ENCODE measurements at regions of chr9 and their contacts with region 1.

Region 1: DNA sequence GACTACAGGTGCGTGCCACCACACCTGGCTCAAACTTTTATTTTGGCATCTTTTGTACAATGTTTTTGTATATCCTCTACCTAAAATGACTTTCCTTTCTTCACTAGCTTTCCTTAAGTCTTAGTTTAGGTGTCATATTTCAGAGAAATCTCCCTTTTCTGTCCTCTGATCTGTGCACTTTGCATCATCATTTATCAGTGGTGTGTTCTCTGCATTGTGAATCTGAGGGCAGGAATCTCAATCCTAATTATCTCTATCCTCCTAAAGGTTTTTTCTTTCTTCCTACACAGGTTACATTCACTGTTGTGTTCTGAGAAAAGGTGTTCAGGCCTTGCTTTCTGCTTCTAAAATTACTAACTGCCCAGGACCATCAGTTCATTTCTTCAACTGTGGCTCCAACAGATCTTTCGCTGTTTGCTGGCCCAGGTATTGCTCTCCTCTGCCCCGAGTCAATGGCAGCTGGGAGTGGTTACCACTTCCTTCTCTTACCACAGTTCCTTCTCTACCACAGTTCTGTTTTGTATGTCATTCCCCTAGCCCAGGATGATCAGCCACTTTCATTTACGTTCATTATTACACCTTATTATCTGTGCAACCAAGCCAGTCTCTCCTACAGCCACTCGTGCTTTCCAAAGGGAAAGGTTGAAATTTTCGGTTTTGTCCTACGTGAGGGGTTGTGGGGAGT is 14.0 kb downstream of the TGFBR1 start:
- DNase-seq: peak in 34 of 35 experiments; percentile 22 to 75 (median 52)
- ATAC-seq: peak; percentile 100
- H3K4me3 ChIP-seq: peak overlapping the region; percentile 13 to 33
- H3K4me3 Mint-ChIP-seq: peak overlapping the region; percentile 62 to 74 (median 72)
- H3K27ac ChIP-seq: peak overlapping the region; percentile 30
- H3K27ac Mint-ChIP-seq: peak overlapping the region; percentile 90 to 92
- H3K4me1 ChIP-seq: peaks cover 29 to 89% of the 10 kb centered on the region in 2 experiments
- H3K4me1 Mint-ChIP-seq: peaks cover 90 to 92% (median 91%) of the 10 kb centered on the region in 3 donors
- H3K27me3 ChIP-seq: no peaks in the 10 kb centered on the region
- H3K27me3 Mint-ChIP-seq: no peaks in the 10 kb centered on the region

Region 2: GRCh38 chr9:99104459-99105151 is 14.3 kb before region 1 on chr9 and contains the start of gene TGFBR1:
- CTCF ChIA-PET with region 1: interaction called, 3 to 6 read pairs
- POLR2A ChIA-PET with region 1: interaction called, 10 read pairs
- DNase-seq: peak; percentile 75 to 95 (median 87)
- ATAC-seq: peak; percentile 86 to 91 (median 88)
- H3K4me3 ChIP-seq: peak within 1 kb of the TSS; percentile 85 to 86
- H3K4me3 Mint-ChIP-seq: peak within 1 kb of the TSS; percentile 90 to 94 (median 92)
- H3K27ac ChIP-seq: peak within 1 kb of the TSS; percentile 74
- H3K27ac Mint-ChIP-seq: peak within 1 kb of the TSS; percentile 95 to 97
- H3K4me1 ChIP-seq: peaks cover 37% of the 10 kb centered on the region in 2 experiments
- H3K4me1 Mint-ChIP-seq: peaks cover 53 to 68% (median 61%) of the 10 kb centered on the region in 3 donors
- H3K27me3 ChIP-seq: no peaks in the 10 kb centered on the region
- H3K27me3 Mint-ChIP-seq: no peaks in the 10 kb centered on the region
- total RNA-seq, gene TGFBR1: 22.3 to 36.9 (median 31.7) TPM